Activated naive CD4-positive, alpha-beta T cell treated with anti-CD3 and anti-CD28 coated beads, Interleukin-2, amount 10 ng/mL, durations not matched to agents 7 days and 5 days (primary cell): ENCODE measurements at regions of chr15 and their contacts with region 1.

Region 1: DNA sequence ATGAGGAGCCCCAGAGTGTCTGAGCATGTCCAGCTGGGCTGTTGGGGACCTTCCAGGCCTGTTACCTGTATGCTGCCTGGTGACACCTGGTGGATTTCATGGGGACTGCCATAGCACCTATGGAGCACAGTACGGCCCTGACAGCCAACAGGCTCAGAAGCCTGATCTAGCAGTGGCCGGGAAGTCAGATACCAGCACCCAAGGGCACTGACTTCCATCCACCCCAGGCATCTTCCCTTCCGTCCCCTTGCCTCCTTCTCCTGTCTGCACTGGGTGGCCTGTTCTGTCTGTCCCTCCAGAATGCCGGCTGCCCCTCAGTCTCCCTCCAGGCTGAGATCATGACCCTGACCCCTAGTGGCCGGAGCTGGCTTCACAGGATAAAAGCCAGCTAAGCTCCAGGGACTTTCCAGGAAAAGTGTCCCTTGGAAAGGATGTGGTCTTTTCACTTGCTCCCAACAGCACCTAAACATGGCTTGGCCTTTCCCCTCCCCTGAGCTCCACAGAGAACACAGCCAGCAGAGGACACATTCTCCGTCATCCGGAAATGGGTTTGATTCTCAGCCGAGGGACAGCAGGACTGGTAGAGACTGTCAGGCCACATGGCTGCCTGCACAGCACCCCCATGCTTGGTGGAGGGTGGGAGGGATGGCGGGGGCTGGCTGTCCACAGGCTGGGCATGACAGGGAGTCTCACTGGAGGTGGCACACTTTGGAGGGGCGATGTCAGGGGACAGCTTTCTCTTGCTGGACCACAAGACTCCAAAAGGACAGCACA is 9.5 kb downstream of the RPS17 start:
- DNase-seq: peak; percentile 83
- H3K4me3 Mint-ChIP-seq: peak overlapping the region; percentile 6
- H3K27ac Mint-ChIP-seq: no peak overlapping the region
- H3K4me1 Mint-ChIP-seq: peaks cover 9% of the 10 kb centered on the region
- H3K27me3 Mint-ChIP-seq: no peaks in the 10 kb centered on the region

Region 2: DNA sequence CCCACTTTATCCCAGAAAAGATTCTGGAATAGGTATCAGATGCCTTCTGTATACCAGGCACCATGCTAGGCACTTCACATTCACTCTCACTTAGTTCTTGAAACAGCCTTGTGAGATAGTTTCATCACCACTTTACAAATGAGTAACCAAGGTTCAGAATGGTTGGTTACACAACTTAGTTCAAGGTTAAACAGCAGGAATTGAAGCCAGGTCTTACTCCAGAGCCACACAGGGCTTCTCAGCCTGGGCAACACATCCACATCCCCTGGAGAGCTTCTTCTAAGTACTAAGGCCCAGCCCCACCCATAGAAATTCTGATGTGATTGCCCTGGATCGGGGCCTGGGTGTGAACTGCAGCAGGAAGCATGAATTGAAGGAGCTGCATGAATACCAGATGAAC is 297.3 kb after region 1 on chr15:
- CTCF ChIA-PET with region 1: no interaction called
- DNase-seq: no peak
- H3K4me3 Mint-ChIP-seq: no peak overlapping the region
- H3K27ac Mint-ChIP-seq: no peak overlapping the region
- H3K4me1 Mint-ChIP-seq: peaks cover 19% of the 10 kb centered on the region
- H3K27me3 Mint-ChIP-seq: no peaks in the 10 kb centered on the region

Region 3: DNA sequence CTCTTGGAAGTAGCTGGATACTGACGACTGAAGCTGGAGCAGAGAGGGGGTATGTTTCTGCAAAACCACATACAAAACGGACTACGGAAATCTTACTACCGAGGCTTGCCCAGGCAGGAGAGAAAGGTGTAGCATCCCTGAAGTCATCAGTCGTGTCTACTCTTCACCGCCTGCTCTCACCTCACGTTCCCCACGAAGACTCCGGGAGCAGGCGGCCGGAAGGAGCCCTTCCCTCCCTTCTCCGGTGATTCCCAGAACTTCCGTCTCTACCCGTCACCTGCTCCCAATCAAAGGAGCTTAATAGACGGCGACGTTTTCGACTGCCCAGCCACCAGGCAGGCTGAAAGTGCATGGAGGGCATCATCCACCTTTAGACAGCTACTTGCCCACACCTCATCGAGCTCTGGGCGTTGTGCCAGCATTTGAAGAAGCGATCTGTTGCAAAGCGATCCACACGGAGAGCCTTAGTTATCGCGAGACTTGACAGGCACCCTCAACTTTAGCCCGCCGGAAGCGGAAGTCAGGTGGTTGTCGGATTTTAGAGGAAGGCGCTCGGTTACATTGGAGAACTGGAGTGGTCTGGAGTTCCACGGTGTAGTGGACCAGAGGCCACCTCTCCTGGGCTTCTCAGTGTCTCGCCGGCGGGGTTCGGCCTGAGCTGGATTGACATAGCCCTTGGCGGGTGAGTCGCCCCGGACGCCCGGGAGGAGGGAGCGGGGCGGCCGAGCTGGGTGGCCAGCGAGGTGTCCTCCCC is 455.1 kb after region 1 on chr15 and contains the start of gene RAMAC:
- CTCF ChIA-PET with region 1: interaction called, 10 read pairs
- DNase-seq: peak; percentile 95
- H3K4me3 Mint-ChIP-seq: peak within 1 kb of the TSS; percentile 97
- H3K27ac Mint-ChIP-seq: peak within 1 kb of the TSS; percentile 91
- H3K4me1 Mint-ChIP-seq: peaks cover 34% of the 10 kb centered on the region
- H3K27me3 Mint-ChIP-seq: no peaks in the 10 kb centered on the region